ENCODE measurements at regions of chr7 and their contacts with region 1.

Region 1: DNA sequence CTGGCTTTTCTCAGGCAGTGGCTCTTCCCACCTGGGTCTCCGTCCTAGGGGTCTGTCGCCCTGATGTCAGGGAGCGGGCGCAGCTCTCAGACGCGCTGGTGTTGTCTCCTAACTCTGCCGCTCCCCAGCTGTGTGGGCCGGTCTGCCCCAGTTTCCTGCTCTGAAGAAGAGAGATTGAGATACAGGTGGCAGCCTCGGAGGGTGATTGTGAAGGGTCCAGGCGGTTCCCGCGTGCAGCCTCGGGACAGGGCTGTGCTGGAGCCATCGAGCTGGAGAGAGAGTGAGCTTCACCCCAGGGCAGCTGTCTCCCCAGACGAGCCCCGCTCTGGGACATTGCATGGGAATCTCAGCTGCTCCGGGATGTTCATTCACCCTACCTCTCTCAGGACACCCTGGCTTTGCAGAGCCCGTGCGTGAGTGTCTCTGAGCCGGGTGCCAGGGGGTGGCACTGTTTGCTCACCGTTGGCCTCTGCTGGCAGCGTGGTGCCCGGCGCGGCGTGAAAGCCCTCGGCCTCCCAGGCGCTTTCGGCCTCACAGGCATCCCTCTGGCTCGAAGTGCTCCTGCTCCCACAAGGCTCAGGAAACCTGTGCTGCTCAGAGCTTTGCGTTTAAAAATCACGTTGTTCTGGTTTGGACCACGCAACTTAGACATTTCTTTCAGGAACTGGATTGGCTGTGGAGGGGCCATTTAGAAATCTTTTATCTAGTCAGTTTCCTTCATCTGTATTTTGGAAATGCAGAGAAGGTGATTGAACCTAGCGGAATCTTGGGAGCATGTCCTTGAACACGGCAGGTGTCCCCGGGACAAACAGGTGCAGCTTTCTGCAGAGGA is 33.8 kb upstream of the ZFAND2A start:
- DNase-seq: peak; percentile 77
- ATAC-seq: peak; percentile 90
- H3K4me3 ChIP-seq: peak overlapping the region; percentile 28; the same call in 1 of the 2 replicates
- H3K27ac ChIP-seq: no peak overlapping the region
- H3K4me1 ChIP-seq: peaks cover 10% of the 10 kb centered on the region; the same call in 1 of the 2 replicates
- H3K27me3 ChIP-seq: no peaks in the 10 kb centered on the region
- CTCF ChIP-seq: peak; percentile 83

Region 2: DNA sequence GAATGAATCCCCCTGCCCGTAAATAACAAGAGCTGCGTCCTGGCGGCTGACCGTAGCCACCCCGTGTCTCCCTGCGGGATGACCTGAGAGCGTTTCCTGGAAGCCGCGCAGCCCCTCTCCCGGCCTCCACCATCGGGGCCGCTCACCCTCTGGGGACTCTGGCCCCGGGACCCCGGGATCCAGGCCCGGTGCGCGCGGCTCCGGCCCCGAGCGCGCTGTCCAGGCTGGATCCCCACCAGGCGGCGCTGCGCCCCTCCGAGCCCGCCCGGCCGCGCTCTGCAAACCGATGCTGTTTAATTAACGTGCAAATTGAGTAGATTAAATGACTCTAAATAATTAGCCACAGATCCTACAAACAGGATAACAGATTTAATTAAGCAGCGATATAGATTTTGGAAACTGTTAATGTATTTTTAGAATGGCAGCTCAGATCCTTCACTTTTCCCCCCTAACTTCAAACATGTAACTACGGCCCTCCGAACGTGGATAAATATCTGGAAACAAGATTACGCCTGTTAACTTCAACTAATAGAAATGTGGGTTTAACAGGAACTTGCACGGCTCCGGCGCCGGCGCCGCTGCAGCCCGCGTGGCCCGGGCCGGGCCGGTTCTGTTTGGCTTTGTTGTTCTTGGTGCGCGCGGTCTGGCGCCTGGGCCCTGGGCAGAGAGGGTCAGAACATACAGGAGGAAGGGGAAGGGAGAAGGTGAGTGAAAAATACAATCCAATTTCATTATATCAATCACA is 31.8 kb after region 1 on chr7:
- CTCF ChIA-PET with region 1: interaction called, 10 read pairs
- POLR2A ChIA-PET with region 1: no interaction called
- intact Hi-C with region 1: no loop called
- DNase-seq: peak; percentile 19
- ATAC-seq: peak; percentile 56
- H3K4me3 ChIP-seq: no peak overlapping the region
- H3K27ac ChIP-seq: no peak overlapping the region
- H3K4me1 ChIP-seq: no peaks in the 10 kb centered on the region
- H3K27me3 ChIP-seq: peaks cover 66% of the 10 kb centered on the region
- CTCF ChIP-seq: peak; percentile 82

Region 3: DNA sequence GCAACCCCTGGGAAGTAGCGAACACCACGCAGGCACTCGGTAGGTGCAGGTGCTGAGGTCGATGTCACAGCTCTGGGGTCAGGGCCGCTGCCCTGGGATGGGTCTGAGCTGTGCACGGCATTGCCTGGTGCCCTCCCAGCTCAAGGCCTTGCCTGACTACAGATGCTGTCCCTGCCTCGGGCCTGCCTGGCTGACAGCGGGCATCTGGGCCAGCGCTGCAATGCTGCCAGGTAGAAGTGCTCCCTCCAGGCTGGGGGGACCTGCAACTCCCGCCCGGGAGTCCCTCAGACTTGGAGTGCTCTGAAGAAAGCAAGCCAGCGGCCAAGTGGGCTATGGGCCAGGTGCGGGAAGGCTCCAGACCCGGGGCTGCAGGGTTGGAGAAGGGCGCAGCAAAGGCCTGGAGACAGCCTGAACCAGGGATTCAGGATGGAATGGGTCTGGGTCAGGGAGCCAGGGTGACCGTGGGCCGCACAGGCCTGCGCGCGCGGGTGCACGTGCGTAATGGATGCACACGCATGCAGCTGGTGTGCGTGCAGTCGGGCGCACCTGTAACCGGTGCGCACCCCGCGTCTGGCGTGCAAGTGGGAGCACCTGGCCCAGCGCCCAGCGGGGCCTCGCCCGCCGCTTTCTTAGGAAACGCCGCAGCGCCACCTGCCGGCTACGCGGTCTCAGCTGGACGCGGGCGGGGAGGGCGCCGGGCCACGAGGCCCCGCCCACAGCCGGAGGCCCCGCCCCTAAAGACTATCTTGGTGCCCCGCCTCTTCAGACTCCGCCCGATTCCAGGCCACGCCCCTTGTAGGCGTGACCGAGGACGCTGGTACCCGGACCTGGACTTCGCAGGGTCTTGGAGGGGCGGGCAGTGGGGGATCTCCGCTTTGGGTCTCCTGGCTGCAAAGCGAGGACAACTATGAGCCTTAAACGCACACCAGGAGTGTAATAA is 218.8 kb after region 1 on chr7:
- CTCF ChIA-PET with region 1: no interaction called
- POLR2A ChIA-PET with region 1: no interaction called
- intact Hi-C with region 1: loop called (anchors 2 kb)
- DNase-seq: peak; percentile 93
- ATAC-seq: peak; percentile 96
- H3K4me3 ChIP-seq: peak overlapping the region; percentile 21; the same call in 1 of the 2 replicates
- H3K27ac ChIP-seq: no peak overlapping the region
- H3K4me1 ChIP-seq: peaks cover 3% of the 10 kb centered on the region; the same call in 1 of the 2 replicates
- H3K27me3 ChIP-seq: no peaks in the 10 kb centered on the region
- CTCF ChIP-seq: peak; percentile 87

Region 4: GRCh38 chr7:1432411-1433082 is 238.7 kb after region 1 on chr7:
- CTCF ChIA-PET with region 1: no interaction called
- POLR2A ChIA-PET with region 1: no interaction called
- intact Hi-C with region 1: loop called (anchors 1 kb)
- DNase-seq: peak; percentile 79
- ATAC-seq: peak; percentile 73
- H3K4me3 ChIP-seq: no peak overlapping the region
- H3K27ac ChIP-seq: no peak overlapping the region
- H3K4me1 ChIP-seq: no peaks in the 10 kb centered on the region
- H3K27me3 ChIP-seq: no peaks in the 10 kb centered on the region
- CTCF ChIP-seq: peak; percentile 88

Measured in PC-3 (cell line).